ENCODE measurements at regions of chr5 and their contacts with region 1.

Region 1: GRCh38 chr5:35430376-35431154 is 187.1 kb upstream of the SPEF2 start:
- DNase-seq: no peak
- H3K4me3 ChIP-seq: no peak overlapping the region
- H3K27ac ChIP-seq: no peak overlapping the region
- H3K4me1 ChIP-seq: no peaks in the 10 kb centered on the region
- H3K27me3 ChIP-seq: no peaks in the 10 kb centered on the region
- CTCF ChIP-seq: no peak
- POLR2A ChIP-seq: no peak

Region 2: DNA sequence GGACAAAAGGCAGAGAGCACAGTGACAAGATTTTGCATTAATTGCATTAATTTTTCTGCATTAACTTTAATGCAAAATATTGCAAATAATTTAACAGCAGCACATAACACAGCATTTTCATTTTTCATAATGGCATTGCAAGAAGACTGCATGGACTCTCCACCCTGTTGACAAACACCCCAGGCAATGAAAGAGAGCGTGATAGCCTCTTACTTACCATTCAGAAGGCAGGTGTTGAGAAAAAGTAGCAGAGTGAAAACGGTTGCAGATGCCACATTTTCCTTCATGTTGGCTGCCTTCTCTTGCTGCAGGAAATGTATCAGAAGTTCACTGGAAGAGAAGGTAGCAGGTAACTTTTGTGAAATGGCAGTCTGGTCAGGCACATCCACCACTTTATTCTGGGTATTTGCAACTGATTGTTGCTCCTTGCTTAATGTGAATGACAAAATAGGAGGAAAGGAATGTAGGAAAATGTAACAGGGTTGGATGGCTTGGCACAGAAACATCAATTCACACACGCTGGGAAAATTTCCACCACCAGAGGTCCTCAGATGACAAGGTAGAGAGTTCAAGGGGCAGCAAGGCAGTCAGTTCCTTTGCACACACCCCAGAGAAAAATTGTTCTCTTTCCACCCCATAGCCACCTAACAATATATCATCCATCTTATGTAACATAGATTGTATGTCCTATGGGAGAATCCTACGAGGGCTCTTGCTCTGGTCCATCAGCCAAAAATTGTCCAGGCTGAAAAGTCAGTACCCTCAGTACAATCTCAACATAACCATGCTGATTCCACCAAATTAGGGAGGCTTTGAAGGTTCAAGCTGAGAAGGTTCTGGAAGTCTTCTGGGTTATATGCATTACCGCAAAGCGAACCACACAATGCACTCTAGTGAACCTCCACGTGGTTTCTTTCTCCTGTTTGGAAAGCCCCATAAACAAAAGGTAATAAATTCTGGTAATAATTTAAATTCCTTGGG is 340.9 kb before region 1 on chr5:
- intact Hi-C with region 1: loop called (anchors 5 kb)
- DNase-seq: peak in 1 of 2 donors; percentile 22
- H3K4me3 ChIP-seq: no peak overlapping the region
- H3K27ac ChIP-seq: no peak overlapping the region
- H3K4me1 ChIP-seq: no peaks in the 10 kb centered on the region
- H3K27me3 ChIP-seq: no peaks in the 10 kb centered on the region
- CTCF ChIP-seq: peak in 2 of 3 donors; percentile 44 to 46
- POLR2A ChIP-seq: no peak

Region 3: DNA sequence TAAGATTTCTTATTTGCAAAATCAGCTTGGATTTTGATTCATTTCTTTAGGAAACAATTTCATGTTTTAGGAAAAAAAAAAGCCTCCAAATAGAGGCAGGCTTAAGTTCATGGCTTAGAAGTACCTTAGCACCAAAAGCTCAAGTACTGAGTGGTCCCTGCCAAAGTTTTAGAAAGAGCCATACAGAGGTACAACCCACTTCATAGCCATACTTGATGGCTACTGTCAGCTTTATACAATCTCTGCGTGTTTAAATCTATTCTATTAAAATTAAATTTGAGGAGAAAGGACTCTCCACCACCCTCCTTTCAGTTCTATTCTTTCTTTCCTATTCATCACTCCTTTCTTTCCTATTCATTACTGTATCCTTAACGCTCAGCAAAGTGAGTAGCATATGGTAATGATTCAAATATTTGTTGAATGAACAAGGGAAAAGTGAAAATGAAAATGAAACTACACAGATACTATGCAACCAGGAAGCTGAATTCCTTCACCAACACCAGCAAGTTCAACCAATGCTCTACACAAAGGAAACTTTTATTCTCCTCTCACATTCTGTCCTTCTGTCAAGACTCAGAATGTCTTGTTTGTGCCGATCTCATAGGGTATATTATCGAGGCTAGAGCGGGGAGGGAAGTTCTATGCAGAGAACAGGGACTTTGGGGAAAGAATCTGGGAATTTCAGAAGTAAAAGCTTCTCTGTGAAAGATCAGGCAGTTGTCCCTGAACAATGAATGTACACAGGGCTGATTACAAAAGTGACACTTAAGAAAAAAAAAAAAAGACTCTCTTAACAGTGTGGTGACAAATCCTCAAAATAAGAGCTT is 48.5 kb after region 1 on chr5:
- intact Hi-C with region 1: no loop called
- DNase-seq: no peak
- H3K4me3 ChIP-seq: peak overlapping the region; percentile 8 to 49 (median 38)
- H3K27ac ChIP-seq: peak overlapping the region in 1 of 2 donors; percentile 77
- H3K4me1 ChIP-seq: no peaks in the 10 kb centered on the region
- H3K27me3 ChIP-seq: no peaks in the 10 kb centered on the region
- CTCF ChIP-seq: no peak
- POLR2A ChIP-seq: no peak

Measured in breast epithelium (tissue), 4 donors.